ENCODE measurements at regions of chr4 and their contacts with region 1.

Region 1: GRCh38 chr4:128517739-128518510 is 230.3 kb upstream of the PGRMC2 start:
- DNase-seq: peak; percentile 84 to 87
- ATAC-seq: peak; percentile 88
- H3K4me3 ChIP-seq: no peak overlapping the region
- H3K27ac ChIP-seq: peak overlapping the region; percentile 87 to 98
- H3K4me1 ChIP-seq: peaks cover 5 to 8% of the 10 kb centered on the region in 2 donors
- H3K27me3 ChIP-seq: no peaks in the 10 kb centered on the region

Region 2: GRCh38 chr4:128379860-128380259 is 138.1 kb before region 1 on chr4:
- intact Hi-C with region 1: loop called in 1 of 2 experiments (anchors 10 kb)
- DNase-seq: peak in 1 of 2 donors; percentile 57
- ATAC-seq: no peak
- H3K4me3 ChIP-seq: no peak overlapping the region
- H3K27ac ChIP-seq: no peak overlapping the region
- H3K4me1 ChIP-seq: peaks cover 0 to 1% of the 10 kb centered on the region in 2 donors
- H3K27me3 ChIP-seq: no peaks in the 10 kb centered on the region

Region 3: DNA sequence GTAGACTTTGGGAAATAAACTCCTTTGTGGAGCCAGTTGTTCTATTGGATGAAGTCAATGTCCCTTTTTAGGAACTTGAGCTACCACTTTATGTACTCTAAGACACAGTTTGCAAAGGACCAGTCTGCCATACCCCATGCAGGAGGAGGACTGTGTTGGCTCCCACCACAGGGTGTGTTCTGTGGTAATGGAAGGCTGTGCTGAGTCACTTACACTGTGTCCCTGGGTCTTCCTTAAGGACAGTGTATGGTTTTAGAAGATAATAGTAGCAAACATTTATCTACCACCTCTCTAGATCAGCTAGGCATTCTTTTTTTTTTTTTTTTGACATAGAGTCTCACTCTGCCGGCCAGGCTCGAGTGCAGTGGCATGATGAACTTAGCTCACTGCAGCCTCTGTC is 46.3 kb before region 1 on chr4:
- intact Hi-C with region 1: loop called in 1 of 2 experiments (anchors 5 kb)
- DNase-seq: no peak
- ATAC-seq: no peak
- H3K4me3 ChIP-seq: no peak overlapping the region
- H3K27ac ChIP-seq: no peak overlapping the region
- H3K4me1 ChIP-seq: peaks cover 0 to 5% of the 10 kb centered on the region in 2 donors
- H3K27me3 ChIP-seq: no peaks in the 10 kb centered on the region

Region 4: DNA sequence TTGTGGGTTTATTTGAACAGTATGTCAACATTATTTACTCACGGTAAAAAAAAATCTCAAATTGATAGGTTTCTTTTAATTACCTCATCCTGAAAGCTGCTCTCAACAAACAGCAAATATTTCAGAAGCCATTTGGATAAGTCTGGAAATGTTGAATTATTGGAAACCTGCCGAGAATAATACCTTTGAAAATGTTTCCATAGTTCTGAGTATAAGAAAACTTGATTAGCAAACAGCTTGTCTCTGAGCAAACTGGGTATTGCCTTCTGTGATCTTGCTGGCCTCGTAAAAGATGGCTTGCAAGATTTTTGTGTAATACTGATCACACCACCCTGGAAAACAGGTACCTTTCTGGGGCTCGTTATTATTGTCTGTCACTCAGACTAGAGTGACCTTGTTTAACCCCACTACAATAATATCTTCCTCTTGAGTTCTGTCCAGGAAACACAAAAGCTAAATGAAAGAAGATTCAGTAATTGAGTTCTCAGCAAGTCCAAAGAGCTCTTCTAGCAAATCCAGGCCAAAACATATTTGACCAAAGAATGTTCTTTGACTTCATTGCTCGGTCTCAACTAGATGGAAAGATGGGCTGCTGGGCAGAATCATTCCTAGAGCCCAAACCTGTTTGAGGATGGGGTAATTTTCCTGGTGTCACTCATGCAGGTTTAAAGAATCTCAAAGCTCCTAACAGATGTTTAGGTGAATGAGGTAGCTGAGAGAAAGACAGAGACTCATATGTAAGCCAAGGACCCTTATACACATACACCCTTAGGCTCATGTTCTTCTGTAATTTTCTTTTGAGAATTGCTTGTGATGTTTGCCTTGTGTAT is 36.0 kb after region 1 on chr4:
- intact Hi-C with region 1: loop called in 1 of 2 experiments (anchors 5 kb)
- DNase-seq: no peak
- ATAC-seq: peak; percentile 14
- H3K4me3 ChIP-seq: peak overlapping the region; percentile 45 to 95
- H3K27ac ChIP-seq: no peak overlapping the region
- H3K4me1 ChIP-seq: peaks cover 3 to 4% of the 10 kb centered on the region in 2 donors
- H3K27me3 ChIP-seq: no peaks in the 10 kb centered on the region